ENCODE measurements at regions of chrX and their contacts with region 1.

Region 1: GRCh38 chrX:154490414-154491083 is at the start of gene SLC10A3:
- DNase-seq: peak; percentile 96

Region 2: DNA sequence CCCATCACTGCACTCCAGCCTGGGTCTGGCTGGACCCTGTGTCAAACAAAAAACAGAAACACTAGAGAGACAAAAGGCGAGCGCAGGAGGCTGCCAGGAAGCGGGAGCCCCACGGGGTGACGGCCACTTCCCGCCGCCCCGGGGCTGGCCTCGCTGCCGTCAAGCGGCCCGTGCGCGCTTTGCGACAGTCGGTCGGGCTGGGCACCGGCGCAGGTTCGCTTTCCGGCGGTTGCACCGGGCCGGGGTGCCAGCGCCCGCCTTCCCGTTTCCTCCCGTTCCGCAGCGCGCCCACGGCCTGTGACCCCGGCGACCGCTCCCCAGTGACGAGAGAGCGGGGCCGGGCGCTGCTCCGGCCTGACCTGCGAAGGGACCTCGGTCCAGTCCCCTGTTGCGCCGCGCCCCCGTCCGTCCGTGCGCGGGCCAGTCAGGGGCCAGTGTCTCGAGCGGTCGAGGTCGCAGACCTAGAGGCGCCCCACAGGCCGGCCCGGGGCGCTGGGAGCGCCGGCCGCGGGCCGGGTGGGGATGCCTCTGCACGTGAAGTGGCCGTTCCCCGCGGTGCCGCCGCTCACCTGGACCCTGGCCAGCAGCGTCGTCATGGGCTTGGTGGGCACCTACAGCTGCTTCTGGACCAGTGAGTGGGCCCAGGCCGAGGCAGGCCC is 79.1 kb before region 1 on chrX and contains the start of gene TAFAZZIN:
- CTCF ChIA-PET with region 1: no interaction called
- POLR2A ChIA-PET with region 1: interaction called, 14 read pairs
- DNase-seq: peak; percentile 88

Region 3: GRCh38 chrX:154478728-154479622 is 11.6 kb before region 1 on chrX and contains the start of gene LAGE3:
- CTCF ChIA-PET with region 1: no interaction called
- POLR2A ChIA-PET with region 1: interaction called, 15 read pairs
- DNase-seq: peak; percentile 95

Region 4: DNA sequence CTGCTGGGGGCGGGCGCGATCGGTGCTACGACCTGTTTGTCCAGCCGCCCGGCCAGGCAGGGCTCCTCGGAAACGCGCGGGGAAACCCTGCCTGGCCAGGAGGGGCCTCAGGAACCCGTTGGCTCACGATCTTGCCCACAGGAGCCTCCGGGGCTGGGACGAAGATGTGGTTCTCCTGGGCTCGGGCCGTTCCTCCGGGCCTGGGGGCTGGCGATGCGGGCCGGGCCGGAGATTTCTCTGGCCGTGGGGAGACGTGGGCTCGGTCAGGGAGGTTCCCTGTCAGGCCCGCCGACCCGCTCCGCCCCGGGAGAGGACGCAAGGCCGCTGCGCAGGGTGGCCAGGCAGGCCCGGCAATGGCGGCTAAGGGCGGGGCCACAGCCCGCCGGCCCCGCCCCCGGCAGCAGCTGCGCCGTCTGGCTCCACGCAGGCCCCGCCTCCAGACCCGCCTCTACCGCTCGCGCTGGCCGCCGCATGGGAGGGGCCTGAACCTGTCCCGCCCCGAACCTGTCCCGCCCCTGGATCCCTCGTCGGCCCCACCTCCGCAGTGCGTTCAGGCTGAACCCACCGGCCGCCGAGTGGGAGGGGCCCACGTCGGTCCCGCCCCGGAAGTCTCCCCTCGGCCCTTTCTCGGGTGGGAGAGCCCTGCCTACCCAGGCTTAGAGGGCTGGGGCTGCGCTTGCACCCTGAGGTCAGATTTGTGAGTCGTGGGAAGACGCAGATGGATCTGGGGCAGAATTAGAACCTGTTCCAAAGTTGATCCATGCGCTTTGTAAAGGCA is 25.5 kb after region 1 on chrX and contains the start of gene FAM3A:
- CTCF ChIA-PET with region 1: no interaction called
- POLR2A ChIA-PET with region 1: interaction called, 21 read pairs
- DNase-seq: peak; percentile 96